Prostate gland (tissue), 2 donors: ENCODE measurements at regions of chr14 and their contacts with region 1.

Region 1: GRCh38 chr14:58861586-58861985 is 223.8 kb downstream of the DACT1 start:
- DNase-seq: no peak
- H3K4me3 ChIP-seq: no peak overlapping the region
- H3K27ac ChIP-seq: no peak overlapping the region
- H3K4me1 ChIP-seq: no peaks in the 10 kb centered on the region
- H3K27me3 ChIP-seq: no peaks in the 10 kb centered on the region
- CTCF ChIP-seq: no peak
- POLR2A ChIP-seq: no peak

Region 2: DNA sequence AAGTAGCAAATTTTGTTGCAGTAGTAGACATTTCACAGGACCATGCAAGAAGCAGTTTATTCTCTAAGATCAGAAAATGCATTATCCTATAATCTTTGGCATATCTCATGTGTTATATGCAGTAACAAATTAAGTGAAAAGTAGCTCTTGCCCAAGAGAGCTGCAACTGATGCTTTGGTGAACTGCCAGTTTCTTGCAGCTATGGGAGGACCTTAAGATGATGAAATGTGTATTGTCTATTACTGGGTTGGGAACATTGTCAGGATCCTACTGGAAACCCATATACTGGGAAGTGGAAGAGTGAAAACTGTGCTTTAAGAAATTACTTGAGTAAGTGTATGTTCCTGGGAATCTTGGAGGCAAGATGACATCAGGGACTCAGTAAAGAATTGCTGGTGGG is 15.0 kb after region 1 on chr14:
- intact Hi-C with region 1: loop called (anchors 2 kb)
- DNase-seq: no peak
- H3K4me3 ChIP-seq: no peak overlapping the region
- H3K27ac ChIP-seq: no peak overlapping the region
- H3K4me1 ChIP-seq: no peaks in the 10 kb centered on the region
- H3K27me3 ChIP-seq: no peaks in the 10 kb centered on the region
- CTCF ChIP-seq: no peak
- POLR2A ChIP-seq: no peak